ENCODE measurements at regions of chr2 and their contacts with region 1.

Region 1: GRCh38 chr2:33467413-33467812 is 9.0 kb upstream of the RASGRP3 start:
- DNase-seq: no peak
- H3K4me3 ChIP-seq: no peak overlapping the region
- H3K27ac ChIP-seq: no peak overlapping the region
- H3K27me3 ChIP-seq: no peaks in the 10 kb centered on the region
- CTCF ChIP-seq: no peak

Region 2: GRCh38 chr2:33372940-33373553 is 94.4 kb before region 1 on chr2:
- CTCF ChIA-PET with region 1: interaction called, 13 read pairs
- POLR2A ChIA-PET with region 1: no interaction called
- DNase-seq: no peak
- H3K4me3 ChIP-seq: no peak overlapping the region
- H3K27ac ChIP-seq: no peak overlapping the region
- H3K27me3 ChIP-seq: no peaks in the 10 kb centered on the region
- CTCF ChIP-seq: peak; percentile 64